AG04449 (cell line): ENCODE measurements at regions of chr6 and their contacts with region 1.

Region 1: GRCh38 chr6:110981202-110981600 is 637 bp upstream of the RPF2 start:
- DNase-seq: no peak
- H3K4me3 ChIP-seq: peak overlapping the region; percentile 97
- CTCF ChIP-seq: no peak

Region 2: GRCh38 chr6:110958329-110959192 is 22.6 kb before region 1 on chr6 and contains the start of gene GTF3C6:
- CTCF ChIA-PET with region 1: interaction called, 3 read pairs
- POLR2A ChIA-PET with region 1: interaction called, 10 read pairs
- DNase-seq: peak; percentile 65
- H3K4me3 ChIP-seq: peak within 1 kb of the TSS; percentile 89
- CTCF ChIP-seq: no peak